ENCODE measurements at regions of chr6 and their contacts with region 1.

Region 1: DNA sequence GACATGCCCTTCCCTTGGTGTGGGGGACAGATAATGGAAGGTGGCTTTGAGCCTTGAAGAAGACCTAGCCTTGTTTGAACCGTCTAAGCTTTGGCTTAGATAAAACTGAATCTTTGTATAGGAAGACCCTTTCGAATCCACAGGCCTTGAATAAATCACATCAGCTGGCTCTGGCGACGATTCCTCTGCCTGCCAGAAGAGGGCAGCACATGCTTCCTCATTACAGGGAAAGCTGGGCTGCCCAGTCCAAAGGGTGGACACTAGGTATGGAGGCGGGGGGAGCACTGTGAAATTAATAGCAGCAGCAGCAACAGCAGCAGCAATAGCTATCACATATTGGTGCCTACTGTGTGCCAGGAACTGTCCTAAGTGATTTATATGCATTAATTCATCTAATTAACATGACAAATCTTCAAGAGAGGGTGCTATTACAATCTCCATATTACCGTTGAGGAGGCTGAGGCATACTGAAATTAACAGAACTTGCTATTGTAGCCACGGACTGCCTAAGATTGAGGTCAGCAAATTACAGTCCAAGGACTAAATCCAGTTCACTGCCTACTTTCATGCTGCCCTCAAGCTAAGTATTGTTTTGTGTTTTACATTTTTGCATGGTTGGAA is 85.1 kb downstream of the CLIC5 start:
- DNase-seq: peak; percentile 68 to 83 (median 70)
- ATAC-seq: peak; percentile 59 to 80 (median 74)
- H3K4me3 ChIP-seq: no peak overlapping the region
- H3K27ac ChIP-seq: peak overlapping the region in 9 of 12 donors; percentile 7 to 58 (median 22)
- H3K4me1 ChIP-seq: peaks cover 0 to 61% (median 20%) of the 10 kb centered on the region in 12 donors
- H3K27me3 ChIP-seq: no peaks in the 10 kb centered on the region
- CTCF ChIP-seq: peak; percentile 95 to 99 (median 96)
- POLR2A ChIP-seq: peak in 1 of 2 donors; percentile 23

Region 2: DNA sequence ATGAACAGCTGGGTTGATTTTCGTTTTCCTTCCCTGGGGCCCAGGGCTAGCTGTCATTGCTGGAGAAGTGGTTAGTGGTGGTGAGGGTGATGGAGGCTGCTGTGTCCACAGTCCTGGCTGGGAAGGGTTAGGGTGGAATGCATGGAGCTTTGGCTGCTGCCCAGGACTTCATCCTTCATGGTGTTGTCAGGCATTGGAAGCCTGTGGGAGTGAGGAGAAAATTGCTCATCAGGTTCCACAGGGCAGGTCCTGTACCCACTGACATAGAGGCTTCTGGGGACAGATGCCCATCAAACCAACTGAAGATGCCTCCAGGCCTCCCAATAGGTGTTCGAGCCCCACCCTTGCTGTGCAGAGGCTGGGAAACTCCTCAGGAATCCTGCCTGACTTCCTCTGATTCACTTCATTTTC is 290.4 kb before region 1 on chr6:
- intact Hi-C with region 1: no loop called
- DNase-seq: no peak
- ATAC-seq: no peak
- H3K4me3 ChIP-seq: no peak overlapping the region
- H3K27ac ChIP-seq: no peak overlapping the region
- H3K4me1 ChIP-seq: no peaks in the 10 kb centered on the region
- H3K27me3 ChIP-seq: peaks cover 0 to 9% (median 0%) of the 10 kb centered on the region in 9 donors
- CTCF ChIP-seq: no peak
- POLR2A ChIP-seq: no peak

Region 3: DNA sequence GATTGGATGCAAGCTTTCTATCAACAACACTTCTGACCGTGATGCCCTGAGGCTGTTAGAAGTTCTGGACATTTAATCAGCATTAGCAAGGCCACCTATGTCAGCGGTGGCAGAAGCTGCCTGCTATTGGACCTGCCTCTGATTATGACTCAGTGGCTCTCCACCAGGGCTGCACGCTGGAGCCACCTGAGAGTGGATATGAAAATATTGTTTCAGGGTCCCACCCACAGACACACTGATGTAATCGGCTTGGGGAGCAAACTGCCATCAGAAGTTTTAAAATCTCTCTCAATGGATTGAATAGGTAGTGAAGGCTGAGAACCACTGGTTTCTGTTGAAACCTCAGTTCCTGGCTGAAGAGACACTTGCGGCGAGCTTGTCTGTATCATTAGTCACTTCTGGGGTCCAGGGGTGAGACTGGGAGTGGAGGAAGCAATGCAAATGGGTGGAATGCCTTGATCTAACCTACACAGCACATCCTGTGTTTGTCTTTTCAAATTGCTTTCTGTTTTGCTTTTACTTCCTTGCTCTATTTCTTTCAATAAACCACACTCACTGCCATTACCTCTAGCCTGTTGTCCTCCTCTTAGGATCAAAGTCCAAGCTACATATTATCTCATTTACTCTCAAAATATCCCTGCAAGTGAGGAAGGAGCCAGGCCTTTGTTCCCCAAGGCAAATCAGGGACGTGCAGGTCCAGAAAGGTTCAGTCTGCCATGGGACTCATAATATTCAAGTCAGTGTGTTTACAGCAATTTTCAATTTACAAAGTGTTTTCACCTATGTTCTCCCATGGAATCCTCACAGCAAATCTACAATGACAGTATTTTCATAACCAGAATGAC is 80.9 kb after region 1 on chr6:
- intact Hi-C with region 1: loop called in 8 of 10 experiments (anchors 2 to 10 kb)
- DNase-seq: peak in 1 of 5 donors; percentile 59
- ATAC-seq: peak; percentile 34 to 71 (median 42)
- H3K4me3 ChIP-seq: peak overlapping the region in 10 of 12 donors; percentile 13 to 89 (median 70)
- H3K27ac ChIP-seq: peak overlapping the region; percentile 74 to 99 (median 96)
- H3K4me1 ChIP-seq: peaks cover 0 to 67% (median 48%) of the 10 kb centered on the region in 12 donors
- H3K27me3 ChIP-seq: peaks cover 0 to 13% (median 0%) of the 10 kb centered on the region in 9 donors
- CTCF ChIP-seq: no peak
- POLR2A ChIP-seq: no peak

Region 4: GRCh38 chr6:46059608-46060007 is 129.1 kb after region 1 on chr6:
- intact Hi-C with region 1: loop called in 2 of 10 experiments (anchors 1 to 5 kb)
- DNase-seq: no peak
- ATAC-seq: peak; percentile 50 to 70 (median 66)
- H3K4me3 ChIP-seq: no peak overlapping the region
- H3K27ac ChIP-seq: no peak overlapping the region
- H3K4me1 ChIP-seq: peaks cover 0 to 13% (median 0%) of the 10 kb centered on the region in 12 donors
- H3K27me3 ChIP-seq: no peaks in the 10 kb centered on the region
- CTCF ChIP-seq: peak in 3 of 12 donors; percentile 6 to 22 (median 15)
- POLR2A ChIP-seq: no peak

Region 5: GRCh38 chr6:46203391-46204177 is 273.1 kb after region 1 on chr6:
- intact Hi-C with region 1: loop called in 1 of 10 experiments (anchors 10 kb)
- DNase-seq: no peak
- ATAC-seq: no peak
- H3K4me3 ChIP-seq: no peak overlapping the region
- H3K27ac ChIP-seq: no peak overlapping the region
- H3K4me1 ChIP-seq: no peaks in the 10 kb centered on the region
- H3K27me3 ChIP-seq: no peaks in the 10 kb centered on the region
- CTCF ChIP-seq: no peak
- POLR2A ChIP-seq: no peak

Region 6: GRCh38 chr6:46254331-46254730 is 323.8 kb after region 1 on chr6:
- intact Hi-C with region 1: no loop called
- DNase-seq: no peak
- ATAC-seq: no peak
- H3K4me3 ChIP-seq: no peak overlapping the region
- H3K27ac ChIP-seq: no peak overlapping the region
- H3K4me1 ChIP-seq: peaks cover 0 to 42% (median 16%) of the 10 kb centered on the region in 12 donors
- H3K27me3 ChIP-seq: no peaks in the 10 kb centered on the region
- CTCF ChIP-seq: no peak
- POLR2A ChIP-seq: no peak

Region 7: DNA sequence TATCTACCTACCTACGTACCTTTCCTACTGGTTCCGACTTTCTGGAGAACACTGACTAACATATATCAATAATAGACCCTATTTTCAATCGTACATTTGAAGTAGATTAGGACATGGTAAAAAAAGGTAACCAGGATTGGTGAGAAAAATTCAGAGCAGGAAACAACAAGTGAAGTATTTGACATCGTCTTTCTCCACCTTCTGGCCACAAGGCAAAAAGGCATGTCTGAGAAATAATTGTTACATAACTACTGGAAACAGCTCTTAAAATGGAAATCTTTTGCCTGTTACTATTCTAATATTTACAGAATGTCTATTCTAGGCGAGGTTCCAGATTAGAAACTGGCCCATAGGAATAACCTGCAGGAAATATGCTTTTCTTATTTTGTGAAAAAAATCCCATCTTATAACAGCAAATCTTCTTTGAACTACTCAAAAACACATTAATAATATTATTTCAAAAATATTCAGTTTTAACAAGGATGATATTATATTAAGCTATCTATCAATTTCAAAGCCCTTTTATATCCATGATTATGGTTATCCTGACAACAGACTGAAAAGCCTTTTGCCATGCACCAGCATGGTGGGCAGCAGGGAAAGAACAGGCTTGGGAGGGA is 479.9 kb after region 1 on chr6:
- intact Hi-C with region 1: loop called in 6 of 10 experiments (anchors 5 to 10 kb)
- DNase-seq: peak in 2 of 5 donors; percentile 16 to 26
- ATAC-seq: peak in 1 of 4 donors; percentile 17
- H3K4me3 ChIP-seq: no peak overlapping the region
- H3K27ac ChIP-seq: peak overlapping the region in 10 of 12 donors; percentile 4 to 63 (median 42)
- H3K4me1 ChIP-seq: peaks cover 3 to 69% (median 40%) of the 10 kb centered on the region in 12 donors
- H3K27me3 ChIP-seq: no peaks in the 10 kb centered on the region
- CTCF ChIP-seq: peak; percentile 57 to 91 (median 78)
- POLR2A ChIP-seq: no peak